Dorsolateral prefrontal cortex (tissue), 120 donors: ENCODE measurements at regions of chr17 and their contacts with region 1.

Region 1: DNA sequence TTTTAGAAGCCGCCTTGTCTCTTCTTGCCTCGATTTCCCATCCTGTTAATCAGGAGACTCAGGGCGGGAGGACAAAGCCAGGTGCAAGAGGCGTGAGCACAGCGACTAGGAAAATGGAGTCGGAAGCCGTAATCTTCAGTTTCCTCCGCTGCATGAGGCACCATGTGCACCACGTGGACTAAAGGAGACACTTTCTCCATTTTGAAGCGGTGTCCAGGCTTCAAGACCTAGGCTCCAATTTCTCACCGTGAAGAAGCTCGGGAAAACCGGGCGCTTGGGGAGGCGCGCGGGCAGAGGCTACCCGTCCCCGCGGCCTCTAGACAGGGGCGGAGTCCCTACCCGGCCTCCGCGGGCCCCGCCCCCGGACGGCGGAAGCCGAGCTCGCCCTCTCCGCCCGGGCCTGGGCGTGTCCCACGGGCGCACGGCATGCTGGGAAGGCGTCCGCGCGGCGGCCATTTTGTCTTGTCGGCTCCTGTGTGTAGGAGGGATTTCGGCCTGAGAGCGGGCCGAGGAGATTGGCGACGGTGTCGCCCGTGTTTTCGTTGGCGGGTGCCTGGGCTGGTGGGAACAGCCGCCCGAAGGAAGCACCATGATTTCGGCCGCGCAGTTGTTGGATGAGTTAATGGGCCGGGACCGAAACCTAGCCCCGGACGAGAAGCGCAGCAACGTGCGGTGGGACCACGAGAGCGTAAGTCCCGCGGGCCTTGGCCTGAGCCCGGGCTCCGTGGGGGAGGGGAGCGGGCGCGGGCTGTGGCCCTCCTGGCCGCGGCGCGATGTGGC is at the start of gene LUC7L3:
- DNase-seq: peak; percentile 89 to 95 (median 92)
- H3K4me3 ChIP-seq: peak within 1 kb of the TSS; percentile 58 to 99 (median 90)
- H3K27ac ChIP-seq: peak within 1 kb of the TSS; percentile 85 to 100 (median 98)
- H3K27me3 ChIP-seq: no peaks in the 10 kb centered on the region
- CTCF ChIP-seq: peak in 36 of 56 donors; percentile 3 to 62 (median 31)
- total RNA-seq, gene LUC7L3: 151 to 348 (median 226) TPM

Region 2: DNA sequence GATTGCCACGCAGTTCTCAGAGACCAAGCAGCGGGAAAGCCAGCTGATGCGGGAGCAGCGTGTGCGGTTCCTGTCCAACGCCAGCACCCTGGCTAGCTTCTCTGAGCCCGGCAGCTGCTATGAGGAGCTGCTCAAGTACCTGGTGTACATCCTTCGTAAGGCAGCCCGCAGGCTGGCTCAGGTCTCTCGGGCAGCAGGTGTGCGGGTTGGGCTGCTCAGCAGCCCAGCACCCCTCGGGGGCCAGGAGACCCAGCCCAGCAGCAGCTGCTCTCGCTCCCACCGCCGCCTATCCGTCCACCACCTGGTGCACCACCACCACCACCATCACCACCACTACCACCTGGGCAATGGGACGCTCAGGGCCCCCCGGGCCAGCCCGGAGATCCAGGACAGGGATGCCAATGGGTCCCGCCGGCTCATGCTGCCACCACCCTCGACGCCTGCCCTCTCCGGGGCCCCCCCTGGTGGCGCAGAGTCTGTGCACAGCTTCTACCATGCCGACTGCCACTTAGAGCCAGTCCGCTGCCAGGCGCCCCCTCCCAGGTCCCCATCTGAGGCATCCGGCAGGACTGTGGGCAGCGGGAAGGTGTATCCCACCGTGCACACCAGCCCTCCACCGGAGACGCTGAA is 143.6 kb before region 1 on chr17:
- intact Hi-C with region 1: no loop called
- DNase-seq: no peak
- H3K4me3 ChIP-seq: no peak overlapping the region
- H3K27ac ChIP-seq: no peak overlapping the region
- H3K27me3 ChIP-seq: no peaks in the 10 kb centered on the region
- CTCF ChIP-seq: no peak

Region 3: DNA sequence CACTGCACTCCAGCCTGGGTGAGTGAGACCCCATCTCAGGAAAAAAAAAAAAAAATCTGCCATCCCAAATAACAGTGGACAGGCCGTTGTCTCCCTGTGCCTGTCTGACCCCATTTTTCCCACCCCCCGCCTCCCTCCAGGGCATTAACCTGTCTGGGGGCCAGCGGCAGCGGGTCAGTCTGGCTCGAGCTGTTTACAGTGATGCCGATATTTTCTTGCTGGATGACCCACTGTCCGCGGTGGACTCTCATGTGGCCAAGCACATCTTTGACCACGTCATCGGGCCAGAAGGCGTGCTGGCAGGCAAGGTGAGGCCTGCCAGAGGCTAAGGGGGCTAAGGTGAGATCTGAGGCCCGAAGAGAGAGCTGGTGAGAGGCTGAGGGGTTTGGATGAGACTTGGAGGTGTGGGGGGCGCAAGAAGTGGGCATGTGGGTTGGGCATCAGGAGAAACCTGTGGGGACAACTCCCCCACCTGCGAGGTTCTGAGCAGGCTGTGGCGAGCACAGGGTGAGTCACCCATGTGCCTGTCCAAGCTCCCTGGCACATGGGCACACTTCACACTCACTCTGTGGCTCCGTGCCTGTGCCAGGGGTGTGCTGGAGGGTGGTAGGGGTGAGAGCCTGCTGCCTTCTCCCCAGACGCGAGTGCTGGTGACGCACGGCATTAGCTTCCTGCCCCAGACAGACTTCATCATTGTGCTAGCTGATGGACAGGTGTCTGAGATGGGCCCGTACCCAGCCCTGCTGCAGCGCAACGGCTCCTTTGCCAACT is 46.3 kb before region 1 on chr17:
- intact Hi-C with region 1: no loop called
- DNase-seq: peak in 3 of 10 donors; percentile 16 to 35 (median 17)
- H3K4me3 ChIP-seq: no peak overlapping the region
- H3K27ac ChIP-seq: no peak overlapping the region
- H3K27me3 ChIP-seq: no peaks in the 10 kb centered on the region
- CTCF ChIP-seq: no peak

Region 4: GRCh38 chr17:50707289-50708049 is 11.9 kb before region 1 on chr17 and contains the start of gene ANKRD40:
- intact Hi-C with region 1: loop called (anchors 1 kb)
- DNase-seq: peak; percentile 78 to 92 (median 90)
- H3K4me3 ChIP-seq: peak within 1 kb of the TSS; percentile 59 to 94 (median 80)
- H3K27ac ChIP-seq: peak within 1 kb of the TSS; percentile 92 to 100 (median 99)
- H3K27me3 ChIP-seq: no peaks in the 10 kb centered on the region
- CTCF ChIP-seq: peak in 18 of 56 donors; percentile 4 to 43 (median 20)
- total RNA-seq, gene ANKRD40: 68.8 to 245 (median 115) TPM

Region 5: GRCh38 chr17:50841949-50842354 is 122.6 kb after region 1 on chr17:
- intact Hi-C with region 1: loop called in 1 of 2 experiments (anchors 10 kb)
- DNase-seq: peak in 9 of 10 donors; percentile 77 to 87 (median 84)
- H3K4me3 ChIP-seq: peak overlapping the region in 1 of 59 donors; percentile 8
- H3K27ac ChIP-seq: peak overlapping the region in 26 of 59 donors; percentile 2 to 90 (median 56)
- H3K27me3 ChIP-seq: no peaks in the 10 kb centered on the region
- CTCF ChIP-seq: peak; percentile 43 to 97 (median 89)

Region 6: DNA sequence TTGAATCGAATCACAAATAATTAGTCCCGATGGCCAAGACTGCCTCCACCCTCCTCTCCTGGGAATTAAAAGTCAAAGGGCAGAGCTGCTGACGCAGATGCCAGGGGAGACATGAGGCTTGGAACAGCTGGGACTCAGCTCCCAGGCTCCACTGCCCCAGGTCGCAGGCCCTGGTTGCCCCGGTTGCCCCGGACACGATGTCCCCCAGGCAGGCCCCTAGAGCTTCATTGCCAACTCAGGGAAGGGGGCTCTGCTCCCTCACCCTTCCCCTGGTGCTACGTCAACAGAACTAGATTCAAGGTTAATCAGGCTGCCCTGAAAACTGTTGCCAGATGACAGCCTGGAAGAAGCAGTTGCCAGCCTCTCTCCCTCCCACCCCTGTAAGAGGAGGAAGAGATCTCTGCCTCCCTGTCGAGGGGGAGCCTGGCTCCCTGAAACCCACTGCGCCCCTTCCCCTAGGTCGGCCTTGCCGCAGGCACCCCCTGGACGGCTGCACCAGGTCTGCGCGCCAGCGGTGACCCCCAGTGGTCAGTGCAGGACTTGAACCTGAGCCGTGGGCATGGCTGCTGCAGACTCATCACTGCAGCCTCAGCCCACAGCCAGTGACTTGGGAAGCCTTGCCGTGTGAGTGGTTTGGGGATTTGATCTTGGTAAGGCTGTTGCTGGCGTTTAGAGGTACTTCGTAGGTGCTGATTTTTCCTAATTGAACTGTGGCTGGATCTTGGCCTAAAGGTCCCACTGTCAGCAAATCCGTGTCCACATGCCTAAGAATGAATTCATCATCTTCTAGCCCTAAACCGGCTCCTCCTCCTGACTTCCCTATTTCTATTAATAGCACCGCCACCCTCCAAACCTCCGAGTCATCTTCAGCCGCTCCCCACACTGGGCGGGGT is 230.9 kb after region 1 on chr17:
- intact Hi-C with region 1: no loop called
- DNase-seq: peak; percentile 67 to 86 (median 80)
- H3K4me3 ChIP-seq: peak overlapping the region in 19 of 59 donors; percentile 0 to 49 (median 15)
- H3K27ac ChIP-seq: peak overlapping the region; percentile 21 to 95 (median 81)
- H3K27me3 ChIP-seq: no peaks in the 10 kb centered on the region
- CTCF ChIP-seq: peak; percentile 61 to 98 (median 88)